ENCODE measurements at regions of chr15 and their contacts with region 1.

Region 1: GRCh38 chr15:43185157-43186017 is at the start of gene CCNDBP1:
- DNase-seq: peak; percentile 77
- H3K4me3 ChIP-seq: peak within 1 kb of the TSS; percentile 60 to 86 (median 74)
- H3K27ac ChIP-seq: peak within 1 kb of the TSS; percentile 22
- H3K4me1 ChIP-seq: peaks cover 4% of the 10 kb centered on the region
- H3K27me3 ChIP-seq: no peaks in the 10 kb centered on the region
- CTCF ChIP-seq: peak; percentile 10 to 51
- total RNA-seq, gene CCNDBP1: 41.3 to 82.5 TPM

Region 2: DNA sequence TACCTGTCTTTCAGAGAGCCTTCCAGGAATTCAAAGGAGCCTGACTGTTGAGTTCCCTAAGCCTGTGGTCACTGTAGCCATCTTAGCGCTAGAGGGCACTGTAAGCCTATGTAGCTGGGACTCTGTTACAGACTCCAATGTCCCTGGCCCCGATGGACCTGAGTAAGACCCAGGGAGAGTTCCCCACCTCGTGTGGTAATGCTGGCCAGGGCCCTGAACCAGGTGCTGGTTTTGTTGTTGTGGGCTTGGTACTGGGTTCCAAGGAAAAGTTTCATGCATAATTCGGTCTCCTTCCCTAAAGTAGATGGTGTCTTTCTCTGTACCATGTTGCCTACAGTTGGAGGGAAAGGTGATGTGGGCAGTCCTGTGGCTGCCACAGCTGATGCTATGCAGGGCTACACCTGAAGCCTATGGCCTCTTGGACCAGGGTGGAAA is 480.9 kb before region 1 on chr15:
- CTCF ChIA-PET with region 1: no interaction called
- dilution Hi-C with region 1: no loop called
- in situ Hi-C with region 1: no loop called
- intact Hi-C with region 1: loop called (anchors 5 kb)
- DNase-seq: peak; percentile 46
- H3K4me3 ChIP-seq: no peak overlapping the region
- H3K27ac ChIP-seq: no peak overlapping the region
- H3K4me1 ChIP-seq: peaks cover 6% of the 10 kb centered on the region
- H3K27me3 ChIP-seq: no peaks in the 10 kb centered on the region
- CTCF ChIP-seq: peak; percentile 94 to 96

Region 3: DNA sequence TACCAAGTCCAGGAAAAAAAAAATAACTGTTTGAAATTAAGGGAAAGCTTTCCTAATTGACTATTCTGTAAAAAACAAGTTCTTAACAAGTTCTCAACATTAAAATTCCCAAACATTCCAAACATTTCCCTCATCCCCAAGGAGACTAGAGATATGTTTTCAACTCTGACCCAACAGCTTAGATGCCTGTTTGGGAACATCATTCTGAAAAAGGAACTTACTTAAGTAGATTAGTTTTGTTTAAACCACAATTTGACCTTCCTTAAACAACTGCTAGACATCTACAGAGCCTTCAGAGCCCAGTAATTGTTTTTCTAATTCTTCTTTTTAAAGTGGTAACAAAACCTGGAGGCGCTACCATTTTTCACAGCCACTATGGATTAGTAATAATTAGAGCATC is 92.4 kb before region 1 on chr15:
- CTCF ChIA-PET with region 1: no interaction called
- dilution Hi-C with region 1: loop called (anchors 5 kb)
- in situ Hi-C with region 1: no loop called
- intact Hi-C with region 1: no loop called
- DNase-seq: no peak
- H3K4me3 ChIP-seq: no peak overlapping the region
- H3K27ac ChIP-seq: no peak overlapping the region
- H3K4me1 ChIP-seq: peaks cover 14% of the 10 kb centered on the region
- H3K27me3 ChIP-seq: no peaks in the 10 kb centered on the region
- CTCF ChIP-seq: no peak

Region 4: GRCh38 chr15:43204016-43204901 is 18.9 kb after region 1 on chr15:
- CTCF ChIA-PET with region 1: no interaction called
- dilution Hi-C with region 1: no loop called
- in situ Hi-C with region 1: no loop called
- intact Hi-C with region 1: loop called (anchors 2 kb)
- DNase-seq: peak; percentile 58
- H3K4me3 ChIP-seq: no peak overlapping the region
- H3K27ac ChIP-seq: no peak overlapping the region
- H3K4me1 ChIP-seq: peaks cover 8% of the 10 kb centered on the region
- H3K27me3 ChIP-seq: no peaks in the 10 kb centered on the region
- CTCF ChIP-seq: peak; percentile 65 to 73

Region 5: GRCh38 chr15:43285609-43286037 is 100.2 kb after region 1 on chr15:
- CTCF ChIA-PET with region 1: no interaction called
- dilution Hi-C with region 1: loop called (anchors 5 kb)
- in situ Hi-C with region 1: no loop called
- intact Hi-C with region 1: loop called (anchors 1 kb)
- DNase-seq: peak; percentile 46
- H3K4me3 ChIP-seq: no peak overlapping the region
- H3K27ac ChIP-seq: no peak overlapping the region
- H3K4me1 ChIP-seq: no peaks in the 10 kb centered on the region
- H3K27me3 ChIP-seq: no peaks in the 10 kb centered on the region
- CTCF ChIP-seq: peak; percentile 78 to 88